ENCODE measurements at regions of chr22 and their contacts with region 1.

Region 1: DNA sequence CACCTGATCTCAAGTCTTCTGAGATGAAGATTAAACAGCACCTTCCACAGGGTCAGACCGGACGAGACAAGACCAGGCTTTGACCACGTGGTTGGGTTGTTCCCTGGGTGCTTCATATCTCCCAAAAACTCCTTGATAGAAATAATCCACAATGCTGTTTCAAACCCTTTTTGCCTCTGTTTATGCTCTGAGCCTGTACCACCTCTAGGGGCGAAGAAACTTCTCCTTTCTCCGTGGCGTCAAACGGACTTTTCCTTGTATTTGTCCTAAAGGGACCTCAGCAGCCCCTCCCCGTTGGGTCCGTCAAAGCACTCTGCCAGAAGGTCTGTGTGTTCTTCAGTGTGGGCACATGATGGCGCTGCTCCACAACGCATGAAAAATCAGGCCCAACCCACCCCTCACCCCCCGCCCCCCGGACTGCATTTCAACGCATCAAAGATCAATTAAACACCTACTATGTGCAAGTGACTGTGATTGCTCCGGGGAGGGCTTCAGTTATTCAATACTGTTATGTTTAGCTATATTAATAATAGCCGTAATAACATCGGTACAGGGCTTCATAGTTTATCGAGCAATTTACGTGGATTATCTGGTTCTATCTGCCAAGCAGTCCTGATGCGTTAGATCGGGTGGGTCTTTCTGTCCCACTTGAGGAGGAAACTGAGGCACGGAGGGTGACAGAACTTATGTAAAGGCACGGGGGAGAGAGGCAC is 17.3 kb upstream of the EIF3D start:
- DNase-seq: peak in 4 of 5 donors; percentile 33 to 39 (median 36)
- ATAC-seq: peak; percentile 32 to 74 (median 69)
- H3K4me3 ChIP-seq: no peak overlapping the region
- H3K27ac ChIP-seq: no peak overlapping the region
- H3K4me1 ChIP-seq: peaks cover 0 to 6% (median 0%) of the 10 kb centered on the region in 12 donors
- H3K27me3 ChIP-seq: peaks cover 3 to 40% (median 10%) of the 10 kb centered on the region in 9 donors
- CTCF ChIP-seq: peak; percentile 26 to 65 (median 51)
- POLR2A ChIP-seq: no peak

Region 2: DNA sequence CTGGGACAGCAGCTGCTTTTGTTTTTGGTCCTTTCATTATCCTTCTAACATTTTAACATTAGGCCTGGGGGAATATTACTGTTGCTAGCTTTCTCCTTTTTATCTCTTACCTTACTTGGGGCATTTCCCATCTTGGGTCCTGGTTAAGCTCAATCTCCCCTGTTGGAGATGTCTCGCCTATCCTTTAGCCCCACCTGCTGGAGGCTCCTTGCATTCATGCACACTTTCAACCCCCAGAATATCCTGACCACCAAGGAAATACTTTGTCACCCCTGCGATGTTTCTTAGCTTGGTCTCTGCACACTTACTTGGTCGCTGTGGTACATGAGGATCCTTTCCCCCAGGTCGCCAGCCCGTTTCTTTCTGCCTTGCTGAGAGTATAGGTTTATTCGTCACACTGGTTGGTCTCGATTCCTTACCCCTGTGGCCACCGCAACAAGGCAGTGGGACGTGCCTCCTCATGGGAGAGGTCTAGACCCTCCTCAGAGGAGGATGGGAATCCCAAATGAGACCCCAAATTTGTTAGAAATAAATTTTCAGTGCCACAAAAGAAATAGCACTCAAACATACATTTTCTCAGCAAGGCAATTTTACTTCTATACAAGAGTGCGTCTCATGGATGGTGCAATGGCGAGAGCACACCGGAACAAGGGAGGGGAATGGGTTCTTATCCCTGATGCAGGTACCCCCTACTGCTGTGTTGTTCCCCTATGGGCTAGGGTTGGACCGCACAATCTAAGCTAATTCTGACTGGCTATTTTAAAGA is 59.4 kb before region 1 on chr22:
- intact Hi-C with region 1: no loop called
- DNase-seq: peak in 3 of 5 donors; percentile 46 to 54 (median 53)
- ATAC-seq: no peak
- H3K4me3 ChIP-seq: no peak overlapping the region
- H3K27ac ChIP-seq: no peak overlapping the region
- H3K4me1 ChIP-seq: peaks cover 0 to 10% (median 6%) of the 10 kb centered on the region in 12 donors
- H3K27me3 ChIP-seq: no peaks in the 10 kb centered on the region
- CTCF ChIP-seq: peak; percentile 52 to 78 (median 64)
- POLR2A ChIP-seq: no peak

Region 3: GRCh38 chr22:36757668-36758211 is 211.5 kb after region 1 on chr22:
- intact Hi-C with region 1: loop called in 2 of 10 experiments (anchors 5 to 10 kb)
- DNase-seq: peak; percentile 70 to 89 (median 82)
- ATAC-seq: peak; percentile 49 to 89 (median 82)
- H3K4me3 ChIP-seq: no peak overlapping the region
- H3K27ac ChIP-seq: no peak overlapping the region
- H3K4me1 ChIP-seq: peaks cover 0 to 6% (median 0%) of the 10 kb centered on the region in 12 donors
- H3K27me3 ChIP-seq: peaks cover 0 to 33% (median 4%) of the 10 kb centered on the region in 9 donors
- CTCF ChIP-seq: peak; percentile 54 to 84 (median 74)
- POLR2A ChIP-seq: no peak

Region 4: DNA sequence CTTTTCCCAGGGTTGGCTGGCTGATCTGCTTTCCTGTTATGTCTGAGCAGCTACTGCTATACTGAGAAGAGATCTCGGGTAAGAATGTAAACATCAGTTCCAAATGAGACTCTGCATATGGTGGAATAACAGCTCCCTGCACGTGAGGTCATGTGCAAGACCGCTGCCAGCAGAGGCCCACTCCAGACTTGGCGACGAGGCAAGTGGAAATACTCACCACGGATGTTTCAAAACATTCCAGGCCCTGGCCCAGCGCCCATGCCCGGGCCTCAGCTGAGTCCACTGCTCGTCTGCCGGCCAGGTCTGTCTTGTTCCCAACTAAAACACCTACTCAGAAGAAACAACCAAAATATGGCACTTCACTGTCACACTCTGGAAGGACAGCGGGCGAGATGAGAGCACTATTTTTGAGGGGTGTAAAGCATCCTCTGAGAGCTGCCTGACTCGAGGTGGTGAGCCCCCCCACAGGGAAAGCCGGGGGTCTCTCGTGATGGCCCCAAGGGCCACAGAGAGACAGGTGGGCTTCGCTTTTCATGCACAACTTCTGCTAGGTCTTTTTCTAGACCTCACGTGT is 216.5 kb after region 1 on chr22:
- intact Hi-C with region 1: loop called in 2 of 10 experiments (anchors 5 to 10 kb)
- DNase-seq: peak; percentile 45 to 83 (median 77)
- ATAC-seq: peak; percentile 72 to 91 (median 81)
- H3K4me3 ChIP-seq: no peak overlapping the region
- H3K27ac ChIP-seq: peak overlapping the region in 1 of 12 donors; percentile 63
- H3K4me1 ChIP-seq: peaks cover 0 to 11% (median 0%) of the 10 kb centered on the region in 12 donors
- H3K27me3 ChIP-seq: no peaks in the 10 kb centered on the region
- CTCF ChIP-seq: no peak
- POLR2A ChIP-seq: no peak

Region 5: DNA sequence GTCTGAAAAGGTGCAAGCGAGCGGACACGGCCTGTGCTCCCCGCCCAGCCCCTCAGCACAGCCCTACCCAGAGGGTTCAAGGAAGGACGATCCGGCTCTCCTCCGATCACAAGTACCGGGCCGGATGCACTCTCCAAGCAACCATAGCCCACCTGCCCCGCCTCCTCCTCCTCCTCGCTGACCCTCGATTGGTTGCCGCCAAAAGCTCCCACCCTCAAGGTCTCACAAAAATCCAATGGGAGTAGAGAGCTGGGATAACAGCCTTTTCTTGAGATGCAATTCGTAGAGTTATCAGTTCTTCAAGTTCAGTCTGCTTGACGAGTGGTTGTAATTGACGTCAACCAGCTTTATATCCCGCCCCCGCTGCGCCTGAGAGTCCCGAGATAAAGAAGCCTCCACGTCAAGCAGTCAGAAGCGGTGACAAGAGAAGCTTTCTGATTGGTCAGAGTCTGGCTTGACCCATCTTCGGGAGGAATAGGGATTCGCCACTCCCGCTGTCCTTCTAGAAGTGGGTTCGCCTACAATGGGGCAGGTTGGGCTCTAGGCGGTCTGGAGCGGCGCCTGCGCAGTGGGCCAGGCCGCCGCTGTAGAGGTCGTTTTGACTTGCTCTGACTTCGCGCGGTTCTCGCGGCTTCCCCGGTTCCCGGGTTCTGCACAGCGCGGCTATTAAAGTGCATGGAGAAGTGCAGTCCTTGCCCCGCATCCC is 229.9 kb after region 1 on chr22 and contains the start of gene IFT27:
- intact Hi-C with region 1: loop called in 5 of 10 experiments (anchors 5 to 10 kb)
- DNase-seq: peak; percentile 96 to 99 (median 99)
- ATAC-seq: peak; percentile 98 to 99 (median 98)
- H3K4me3 ChIP-seq: peak within 1 kb of the TSS; percentile 40 to 98 (median 84)
- H3K27ac ChIP-seq: peak within 1 kb of the TSS; percentile 25 to 92 (median 84)
- H3K4me1 ChIP-seq: peaks cover 0 to 18% (median 11%) of the 10 kb centered on the region in 12 donors
- H3K27me3 ChIP-seq: no peaks in the 10 kb centered on the region
- CTCF ChIP-seq: no peak
- POLR2A ChIP-seq: peak in 1 of 2 donors; percentile 62
- total RNA-seq, gene IFT27: 18.9 to 33.8 (median 25.8) TPM

Region 6: GRCh38 chr22:36856121-36856791 is 310.0 kb after region 1 on chr22:
- intact Hi-C with region 1: loop called in 9 of 10 experiments (anchors 1 to 5 kb)
- DNase-seq: peak; percentile 89 to 95 (median 91)
- ATAC-seq: peak; percentile 77 to 93 (median 90)
- H3K4me3 ChIP-seq: no peak overlapping the region
- H3K27ac ChIP-seq: no peak overlapping the region
- H3K4me1 ChIP-seq: peaks cover 0 to 42% (median 8%) of the 10 kb centered on the region in 12 donors
- H3K27me3 ChIP-seq: peaks cover 0 to 11% (median 0%) of the 10 kb centered on the region in 9 donors
- CTCF ChIP-seq: peak; percentile 99 to 100 (median 100)
- POLR2A ChIP-seq: no peak

Region 7: DNA sequence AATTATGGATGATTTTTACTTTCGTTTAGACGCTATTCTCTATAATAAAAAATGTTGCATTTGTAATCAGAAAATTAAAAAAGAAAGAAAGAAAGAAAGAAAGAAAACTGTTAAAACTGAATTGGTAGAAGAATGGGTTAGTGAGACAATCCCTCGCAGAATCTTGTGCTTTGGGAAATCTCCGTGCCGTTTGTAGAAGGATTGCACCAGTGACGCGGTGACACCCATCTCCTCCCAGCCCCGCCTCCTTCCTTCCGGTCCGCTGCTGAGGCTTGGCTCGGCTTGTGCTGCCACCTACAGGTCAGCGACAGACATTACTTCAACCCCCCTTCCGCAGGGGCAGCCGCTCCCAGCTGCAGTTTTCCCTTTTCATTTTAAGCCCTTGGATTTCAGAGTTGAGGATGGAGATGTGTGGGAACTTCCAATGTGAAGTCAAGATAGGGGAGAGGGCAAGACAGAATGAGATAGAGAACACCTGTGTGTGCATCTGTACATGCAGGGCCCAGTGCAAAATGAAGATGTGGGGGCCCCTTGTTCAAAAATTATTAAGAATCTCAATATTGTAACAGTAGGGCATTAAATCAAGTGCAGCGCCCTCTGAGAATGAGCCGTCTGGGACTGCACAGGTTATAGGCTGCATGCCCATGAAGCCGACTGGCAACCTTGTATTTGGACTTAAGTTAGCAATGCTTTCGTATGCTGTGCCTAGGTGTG is 431.9 kb after region 1 on chr22:
- intact Hi-C with region 1: loop called in 3 of 10 experiments (anchors 5 to 10 kb)
- DNase-seq: peak; percentile 90 to 94 (median 91)
- ATAC-seq: peak; percentile 95 to 98 (median 98)
- H3K4me3 ChIP-seq: peak overlapping the region in 11 of 12 donors; percentile 22 to 57 (median 48)
- H3K27ac ChIP-seq: peak overlapping the region in 3 of 12 donors; percentile 22 to 28 (median 25)
- H3K4me1 ChIP-seq: peaks cover 0 to 9% (median 3%) of the 10 kb centered on the region in 12 donors
- H3K27me3 ChIP-seq: peaks cover 0 to 12% (median 4%) of the 10 kb centered on the region in 9 donors
- CTCF ChIP-seq: peak; percentile 91 to 96 (median 95)
- POLR2A ChIP-seq: no peak

Region 8: DNA sequence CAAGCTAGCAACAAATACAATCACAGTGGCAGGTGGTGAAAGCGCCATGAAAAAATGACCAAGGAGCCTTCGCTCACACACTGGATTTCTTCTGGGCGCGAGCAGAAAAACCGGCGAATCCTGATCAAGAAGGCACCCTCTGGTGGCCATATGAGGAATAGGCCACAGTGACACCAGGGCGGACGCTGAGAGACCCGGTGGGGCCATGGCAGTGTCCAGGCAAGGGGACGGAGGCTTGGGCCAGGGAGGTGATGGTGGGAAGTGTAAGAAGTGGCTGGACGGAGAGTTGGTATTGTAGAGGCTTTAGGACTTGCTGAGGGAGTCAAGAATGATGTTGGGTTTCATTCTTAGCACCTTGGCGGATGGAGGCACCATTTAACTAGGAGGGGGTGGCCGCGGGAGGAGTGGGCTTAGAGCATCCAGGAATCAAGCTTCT is 714.7 kb after region 1 on chr22:
- intact Hi-C with region 1: loop called in 1 of 10 experiments (anchors 5 kb)
- DNase-seq: peak; percentile 32 to 78 (median 57)
- ATAC-seq: peak; percentile 37 to 78 (median 69)
- H3K4me3 ChIP-seq: no peak overlapping the region
- H3K27ac ChIP-seq: no peak overlapping the region
- H3K4me1 ChIP-seq: peaks cover 0 to 21% (median 2%) of the 10 kb centered on the region in 12 donors
- H3K27me3 ChIP-seq: peaks cover 4 to 76% (median 26%) of the 10 kb centered on the region in 9 donors
- CTCF ChIP-seq: peak; percentile 69 to 93 (median 86)
- POLR2A ChIP-seq: no peak